ENCODE measurements at regions of chr6 and their contacts with region 1.

Region 1: DNA sequence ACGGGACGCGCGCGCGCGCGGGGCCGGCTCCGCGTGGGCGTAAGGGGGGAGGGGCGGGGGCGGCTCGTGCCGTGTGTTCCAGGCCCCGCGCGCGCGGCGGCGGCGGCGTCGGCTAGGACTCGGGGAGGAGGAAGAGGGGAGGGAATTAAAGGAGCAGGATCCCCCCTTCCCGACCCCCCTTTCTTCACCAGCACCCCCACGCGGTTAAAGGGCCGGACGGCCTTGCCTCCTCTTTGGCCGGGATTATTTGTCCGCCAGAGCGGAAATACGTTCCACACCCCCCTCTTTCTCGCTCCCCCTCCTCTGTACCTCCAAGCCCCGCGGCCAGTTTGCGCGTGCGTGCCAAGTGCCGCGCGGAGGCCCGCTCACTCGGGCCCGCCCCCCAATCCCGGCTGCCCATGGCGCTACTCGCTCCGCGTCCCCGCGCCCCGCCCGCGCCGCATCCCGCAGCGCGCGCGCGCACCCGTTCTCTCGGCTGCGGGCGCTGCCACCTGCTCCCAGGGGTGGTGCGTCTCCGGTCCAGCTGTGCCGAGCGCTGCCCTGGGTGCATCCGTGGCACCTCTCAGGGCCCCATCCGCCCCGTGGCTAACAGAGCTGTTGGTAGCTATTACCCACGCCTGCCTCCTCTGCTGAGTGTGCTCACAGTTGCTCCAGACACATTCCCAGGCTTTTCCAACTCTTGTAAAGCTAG is at the start of gene ZBTB12:
- DNase-seq: peak; percentile 78 to 91 (median 84)
- ATAC-seq: peak; percentile 58 to 65
- H3K4me3 Mint-ChIP-seq: peak within 1 kb of the TSS; percentile 78 to 94 (median 90)
- H3K27ac Mint-ChIP-seq: peak within 1 kb of the TSS; percentile 68 to 96 (median 92)
- H3K4me1 Mint-ChIP-seq: peaks cover 22 to 36% (median 32%) of the 10 kb centered on the region in 4 donors
- H3K27me3 Mint-ChIP-seq: no peaks in the 10 kb centered on the region
- polyA plus RNA-seq, gene ZBTB12: not detected

Region 2: DNA sequence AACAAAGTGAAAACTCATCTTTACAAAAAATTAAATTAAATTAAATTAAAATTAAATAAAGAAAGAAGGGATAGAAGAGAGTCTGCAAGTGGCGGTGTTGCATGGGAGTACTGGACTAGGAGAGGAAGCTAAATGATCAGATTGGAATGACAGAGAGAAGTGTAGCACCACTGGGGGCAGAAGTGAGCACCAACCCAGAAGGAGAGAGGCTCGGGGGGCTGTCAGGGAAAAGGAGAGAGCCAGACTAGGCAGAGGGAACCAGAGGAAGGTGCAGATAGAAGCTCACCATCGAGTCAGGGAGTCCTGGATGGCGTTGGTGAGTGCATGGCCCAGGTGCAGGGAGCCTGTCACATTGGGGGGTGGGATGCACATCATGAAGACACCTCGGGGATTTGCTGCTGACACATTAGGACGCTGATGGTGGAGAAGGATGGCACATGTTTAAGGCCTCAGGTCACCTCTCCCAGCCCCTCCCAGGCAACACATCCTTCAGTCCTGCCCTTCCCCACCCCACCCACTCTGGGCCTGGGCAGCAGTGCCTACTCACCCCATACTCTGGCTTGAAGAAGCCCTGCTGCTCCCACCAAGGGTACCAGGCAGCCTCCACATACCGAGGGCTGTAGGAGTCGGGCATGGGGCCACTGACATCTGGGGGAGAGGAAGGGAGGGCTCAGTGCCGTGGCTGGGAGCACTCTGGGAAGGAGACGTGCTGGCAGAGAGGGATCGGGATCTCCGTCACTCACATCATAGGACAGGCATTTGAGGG is 110.6 kb before region 1 on chr6:
- POLR2A ChIA-PET with region 1: no interaction called
- DNase-seq: peak in 2 of 10 donors; percentile 36 to 40
- ATAC-seq: no peak
- H3K4me3 Mint-ChIP-seq: peak overlapping the region in 2 of 10 donors; percentile 37 to 49
- H3K27ac Mint-ChIP-seq: peak overlapping the region in 9 of 10 donors; percentile 14 to 84 (median 56)
- H3K4me1 Mint-ChIP-seq: peaks cover 11 to 36% (median 28%) of the 10 kb centered on the region in 4 donors
- H3K27me3 Mint-ChIP-seq: no peaks in the 10 kb centered on the region

Region 3: DNA sequence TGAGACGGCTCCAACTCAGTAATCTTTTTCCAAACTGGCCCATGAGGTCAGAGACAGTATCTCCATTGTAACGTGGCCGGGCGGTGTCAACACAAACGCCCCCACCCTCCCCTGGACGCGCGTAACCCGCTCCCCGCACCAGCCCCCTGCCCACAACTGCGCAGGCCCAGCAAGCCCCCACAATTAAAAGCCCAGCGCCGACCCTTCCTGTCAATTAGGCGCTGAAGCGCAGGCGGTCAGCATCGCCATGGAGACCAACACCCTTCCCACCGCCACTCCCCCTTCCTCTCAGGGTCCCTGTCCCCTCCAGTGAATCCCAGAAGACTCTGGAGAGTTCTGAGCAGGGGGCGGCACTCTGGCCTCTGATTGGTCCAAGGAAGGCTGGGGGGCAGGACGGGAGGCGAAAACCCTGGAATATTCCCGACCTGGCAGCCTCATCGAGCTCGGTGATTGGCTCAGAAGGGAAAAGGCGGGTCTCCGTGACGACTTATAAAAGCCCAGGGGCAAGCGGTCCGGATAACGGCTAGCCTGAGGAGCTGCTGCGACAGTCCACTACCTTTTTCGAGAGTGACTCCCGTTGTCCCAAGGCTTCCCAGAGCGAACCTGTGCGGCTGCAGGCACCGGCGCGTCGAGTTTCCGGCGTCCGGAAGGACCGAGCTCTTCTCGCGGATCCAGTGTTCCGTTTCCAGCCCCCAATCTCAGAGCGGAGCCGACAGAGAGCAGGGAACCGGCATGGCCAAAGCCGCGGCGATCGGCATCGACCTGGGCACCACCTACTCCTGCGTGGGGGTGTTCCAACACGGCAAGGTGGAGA is 86.9 kb before region 1 on chr6 and contains the starts of genes HSPA1A and HSPA1L:
- POLR2A ChIA-PET with region 1: no interaction called
- DNase-seq: peak in 6 of 10 donors; percentile 23 to 68 (median 44)
- ATAC-seq: peak; percentile 17 to 39
- H3K4me3 Mint-ChIP-seq: peak within 1 kb of the TSS; percentile 90 to 95 (median 92)
- H3K27ac Mint-ChIP-seq: peak within 1 kb of the TSS; percentile 79 to 95 (median 90)
- H3K4me1 Mint-ChIP-seq: peaks cover 7 to 42% (median 28%) of the 10 kb centered on the region in 4 donors
- H3K27me3 Mint-ChIP-seq: no peaks in the 10 kb centered on the region
- polyA plus RNA-seq, gene HSPA1A: 6.9 to 17.3 (median 11.4) TPM
- polyA plus RNA-seq, gene HSPA1L: 0.56 to 1.6 (median 1.6) TPM

Region 4: DNA sequence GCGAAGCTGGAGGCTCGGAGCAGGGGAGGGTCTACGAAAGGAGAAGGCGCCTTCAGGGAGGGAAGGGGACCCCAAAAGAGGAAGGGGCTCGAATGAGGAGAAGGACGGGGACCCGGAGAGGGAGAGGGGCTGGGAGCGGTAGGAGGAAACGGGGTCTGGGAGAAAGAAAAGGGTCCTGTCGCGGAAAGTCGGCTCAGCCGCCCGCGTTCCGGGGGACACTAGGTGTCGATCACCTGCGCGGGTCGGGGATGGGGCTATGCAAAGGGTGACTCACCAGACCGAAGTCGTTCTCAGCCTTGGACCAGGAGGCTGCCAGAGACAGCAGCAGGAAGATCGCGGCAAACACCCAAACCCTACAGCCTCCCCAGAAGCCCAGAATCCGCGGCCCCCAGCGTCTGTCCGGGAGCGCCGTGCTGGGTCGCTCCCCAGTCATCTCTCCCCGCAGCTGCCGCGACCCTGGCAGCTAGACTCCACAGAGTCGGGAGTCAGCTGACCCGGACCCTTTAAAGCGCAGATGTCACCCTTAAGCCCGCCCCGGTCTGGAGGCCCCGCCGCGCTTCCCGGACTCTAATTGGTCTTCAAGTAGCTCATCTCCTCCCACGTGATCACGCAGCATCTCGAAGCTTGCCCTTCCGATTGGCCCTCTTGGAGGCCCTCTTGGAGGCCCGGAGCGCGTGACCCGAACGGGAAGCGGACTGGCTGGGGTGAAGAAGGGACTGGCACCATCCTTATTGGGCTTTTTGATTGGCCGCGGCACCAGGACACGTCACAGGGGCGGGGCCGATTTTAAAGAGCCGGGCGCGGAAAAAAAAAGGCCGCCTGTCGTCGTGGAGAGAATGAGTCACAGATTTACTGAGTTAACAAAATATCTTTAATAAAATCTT is 39.5 kb before region 1 on chr6 and contains the start of gene NEU1:
- POLR2A ChIA-PET with region 1: interaction called, 30 read pairs
- DNase-seq: peak; percentile 90 to 100 (median 99)
- ATAC-seq: peak; percentile 91 to 97
- H3K4me3 Mint-ChIP-seq: peak within 1 kb of the TSS; percentile 87 to 98 (median 94)
- H3K27ac Mint-ChIP-seq: peak within 1 kb of the TSS; percentile 87 to 98 (median 96)
- H3K4me1 Mint-ChIP-seq: peaks cover 16 to 30% (median 27%) of the 10 kb centered on the region in 4 donors
- H3K27me3 Mint-ChIP-seq: no peaks in the 10 kb centered on the region
- polyA plus RNA-seq, gene NEU1: 10.9 to 17.9 (median 16.2) TPM

Region 5: DNA sequence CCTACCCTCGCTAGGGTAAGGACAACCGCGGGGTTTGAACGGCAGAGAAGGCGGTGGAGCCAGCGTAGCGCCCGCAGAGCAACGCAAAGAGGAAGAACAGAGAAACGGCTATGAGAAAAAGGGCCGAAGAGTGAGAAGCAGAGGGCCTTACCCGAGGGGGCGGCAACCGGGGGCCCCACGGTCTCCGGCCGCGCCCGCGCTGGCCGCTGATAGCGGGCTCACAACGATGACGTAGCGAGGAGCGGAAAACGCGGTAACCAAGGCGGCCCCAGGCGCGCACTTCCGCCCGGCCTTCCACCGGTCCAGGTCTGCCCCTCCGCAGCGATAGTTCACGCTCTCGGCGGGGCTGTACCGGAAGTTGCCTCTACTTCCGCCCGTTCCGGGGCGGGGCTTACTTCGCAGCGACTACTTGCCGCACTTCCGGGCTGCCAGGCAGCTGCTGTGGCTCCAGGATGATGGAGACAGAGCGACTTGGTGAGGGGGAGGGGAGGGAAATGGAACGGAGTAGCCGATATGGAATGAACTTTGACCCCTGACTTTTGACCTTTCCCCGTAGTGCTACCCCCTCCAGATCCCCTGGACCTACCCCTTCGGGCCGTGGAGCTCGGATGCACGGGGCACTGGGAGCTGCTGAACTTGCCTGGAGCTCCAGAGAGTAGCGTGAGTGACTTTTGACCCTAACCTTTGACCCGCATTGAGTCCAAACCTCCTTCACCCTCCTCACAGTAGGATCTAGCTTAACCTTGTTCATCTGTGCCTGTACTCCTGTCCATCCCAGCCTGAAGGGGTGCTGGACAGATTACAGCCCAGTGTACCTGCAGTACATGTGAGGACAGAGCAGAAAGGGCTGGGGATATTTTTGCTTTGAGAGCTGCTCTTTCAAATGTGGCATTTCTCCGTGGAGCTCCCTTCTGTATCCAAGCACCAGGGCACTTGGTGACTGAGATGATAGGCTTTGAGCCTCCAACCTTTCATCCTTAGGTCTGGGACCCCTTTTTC is 56.9 kb after region 1 on chr6 and contains the starts of genes NELFE and SKIC2:
- POLR2A ChIA-PET with region 1: interaction called, 12 read pairs
- DNase-seq: peak; percentile 95 to 99 (median 98)
- ATAC-seq: peak; percentile 96 to 98
- H3K4me3 Mint-ChIP-seq: peak within 1 kb of the TSS; percentile 92 to 97 (median 96)
- H3K27ac Mint-ChIP-seq: peak within 1 kb of the TSS; percentile 94 to 99 (median 98)
- H3K4me1 Mint-ChIP-seq: peaks cover 27 to 53% (median 40%) of the 10 kb centered on the region in 4 donors
- H3K27me3 Mint-ChIP-seq: no peaks in the 10 kb centered on the region
- polyA plus RNA-seq, gene NELFE: 55.9 to 68.6 (median 66.4) TPM
- polyA plus RNA-seq, gene SKIC2: 18.1 to 19.9 (median 19.4) TPM